ENCODE measurements at regions of chr1 and their contacts with region 1.

Region 1: DNA sequence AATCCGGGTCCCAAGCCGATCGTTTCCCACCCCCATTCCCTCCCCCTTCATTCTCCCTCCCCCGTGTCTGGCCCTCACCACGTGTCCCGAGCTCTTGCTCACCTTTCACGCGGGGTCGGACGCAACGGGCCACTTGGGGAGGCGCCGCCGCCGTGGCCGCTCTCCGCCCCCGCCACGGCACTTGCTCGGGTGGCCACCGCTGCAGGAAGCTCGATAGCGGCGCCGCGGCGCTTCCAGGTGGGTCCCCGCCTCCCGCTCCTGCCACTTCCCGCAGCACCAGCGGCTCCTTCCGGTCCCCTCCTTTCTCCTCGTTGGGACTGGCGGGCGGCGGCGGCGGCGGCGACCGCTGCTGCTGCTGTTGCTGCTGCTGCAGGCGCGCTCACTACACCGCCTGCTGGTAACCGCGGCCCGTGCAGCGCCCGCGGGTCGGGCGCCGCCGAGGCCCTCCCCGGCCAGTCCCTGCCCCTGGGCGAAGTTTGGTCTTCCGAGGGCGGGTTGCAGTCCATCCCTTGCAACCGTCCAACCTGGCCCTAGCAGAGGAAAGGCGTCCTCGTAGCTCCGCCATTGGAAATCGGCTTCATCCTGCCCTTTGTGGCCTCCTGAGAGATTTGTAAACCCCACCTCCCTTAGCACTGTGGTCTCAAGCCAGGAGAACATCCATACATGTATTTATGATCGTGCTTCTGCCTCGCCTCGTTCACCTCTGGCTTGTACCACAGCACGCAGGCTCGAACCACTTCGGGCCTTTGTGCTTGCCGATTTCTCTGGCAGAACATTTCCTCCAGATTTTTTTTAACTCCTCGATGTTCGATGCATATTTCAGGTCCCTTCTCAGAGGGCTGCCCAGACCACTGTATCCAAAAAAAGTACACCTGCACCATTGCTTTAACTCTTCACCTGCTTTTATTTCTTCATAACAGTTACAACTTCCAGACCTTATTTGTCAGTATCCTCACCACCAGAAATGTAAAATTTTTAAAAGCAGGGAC is 996 bp upstream of the ZZZ3 start:
- DNase-seq: peak; percentile 95

Region 2: DNA sequence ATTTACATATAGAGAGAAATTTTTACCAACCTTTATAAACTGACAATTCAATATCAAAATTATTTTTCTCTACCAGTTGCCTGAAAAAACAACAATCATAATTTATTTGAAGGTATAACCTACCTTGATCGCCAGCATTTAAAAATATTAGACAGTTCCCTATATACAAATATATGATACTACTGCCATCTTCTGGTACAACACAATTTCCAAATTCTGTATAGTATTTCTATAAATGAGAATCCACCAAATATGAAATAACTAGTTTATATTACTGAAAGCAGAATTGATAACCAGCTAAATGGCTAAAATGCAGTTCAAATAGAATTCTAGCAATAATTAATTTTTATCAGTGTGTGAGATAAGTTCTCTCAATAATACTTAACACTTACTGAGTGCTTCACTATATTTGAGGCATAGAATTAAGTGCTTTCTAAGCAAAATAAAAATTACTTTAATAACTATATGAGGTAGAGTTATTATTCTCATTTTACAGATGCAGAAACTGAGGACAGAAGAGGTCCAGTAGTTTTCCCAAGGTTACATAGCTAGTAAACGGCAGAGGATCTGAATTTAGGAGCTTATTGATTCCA is 539.8 kb before region 1 on chr1:
- intact Hi-C with region 1: loop called (anchors 2 kb)
- DNase-seq: no peak

Region 3: DNA sequence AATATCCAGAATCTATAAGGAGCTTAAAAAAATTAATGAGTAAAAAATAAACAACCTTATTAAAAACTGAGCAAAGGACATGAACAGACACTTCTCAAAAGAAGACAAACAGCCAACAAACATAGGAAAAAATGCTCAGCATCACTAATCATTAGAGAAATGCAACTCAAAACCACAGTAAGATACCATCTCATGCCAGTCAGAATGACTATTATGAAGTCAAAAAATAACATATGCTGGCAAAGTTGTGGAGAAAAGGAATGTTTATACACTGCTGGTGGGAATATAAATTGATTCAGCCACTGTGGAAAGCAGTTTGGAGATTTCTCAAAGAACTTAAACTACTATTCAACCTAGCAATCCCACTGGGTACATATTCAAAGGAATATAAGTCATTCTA is 489.5 kb before region 1 on chr1:
- intact Hi-C with region 1: no loop called
- DNase-seq: no peak

Region 4: DNA sequence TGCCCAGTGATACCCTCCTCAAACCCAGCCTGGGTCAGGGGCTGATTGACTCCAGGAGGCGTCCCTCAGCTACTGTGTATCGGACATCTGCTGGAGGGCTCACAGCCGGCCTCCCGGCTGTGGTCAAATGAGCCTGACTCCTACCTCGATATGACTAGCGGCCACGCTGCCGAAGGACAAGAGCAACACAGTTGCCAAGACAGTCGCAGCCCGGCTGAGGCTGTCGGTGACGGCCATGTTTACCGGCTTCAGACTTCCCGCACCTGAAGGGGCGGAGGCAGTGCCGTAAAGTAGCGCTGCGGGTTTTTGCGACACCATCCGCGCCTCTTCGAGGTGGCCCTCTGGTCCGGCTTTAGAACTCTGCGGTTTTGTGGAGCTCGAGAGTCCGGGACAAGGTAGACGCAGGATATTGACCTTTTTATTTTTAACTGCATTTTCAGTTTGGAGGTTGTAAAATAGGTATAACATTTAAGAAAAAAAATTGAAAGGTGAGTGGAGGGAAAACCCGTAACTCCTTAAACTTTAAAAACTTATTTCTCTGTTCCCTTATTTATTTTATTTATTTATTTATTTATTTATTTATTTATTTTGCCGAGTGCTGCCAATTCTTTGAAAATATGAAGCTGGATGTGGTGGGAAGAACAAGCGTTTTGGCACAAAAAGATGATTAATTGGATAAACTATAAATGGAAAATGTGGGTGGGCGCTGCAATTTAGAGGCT is 464.1 kb before region 1 on chr1 and contains the start of gene PIGK:
- intact Hi-C with region 1: loop called (anchors 1 kb)
- DNase-seq: peak; percentile 95
- total RNA-seq, gene PIGK: 24.1 TPM

Region 5: GRCh38 chr1:77538956-77539518 is 144.4 kb before region 1 on chr1:
- intact Hi-C with region 1: loop called (anchors 5 kb)
- DNase-seq: no peak

Region 6: GRCh38 chr1:77671836-77672235 is 11.6 kb before region 1 on chr1:
- intact Hi-C with region 1: no loop called
- DNase-seq: no peak

Region 7: DNA sequence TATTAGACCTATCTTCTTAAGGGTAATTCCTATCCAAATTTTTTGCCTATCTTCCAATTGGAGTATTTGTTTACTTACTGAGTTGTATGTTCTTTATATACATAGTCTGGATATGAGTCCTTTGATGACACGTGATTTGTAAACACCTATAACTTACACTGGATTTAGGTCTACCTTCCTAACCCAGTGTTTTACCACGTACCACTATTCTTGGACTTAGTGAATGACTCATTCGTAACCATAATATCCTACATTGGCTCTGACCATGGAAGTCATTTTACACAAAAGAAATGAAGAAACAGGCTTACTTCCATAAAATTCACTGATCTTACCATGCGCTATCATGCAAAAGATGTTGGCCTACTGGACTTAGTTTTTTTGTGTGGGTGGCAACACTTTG is 22.9 kb after region 1 on chr1:
- intact Hi-C with region 1: no loop called
- DNase-seq: no peak

Region 8: DNA sequence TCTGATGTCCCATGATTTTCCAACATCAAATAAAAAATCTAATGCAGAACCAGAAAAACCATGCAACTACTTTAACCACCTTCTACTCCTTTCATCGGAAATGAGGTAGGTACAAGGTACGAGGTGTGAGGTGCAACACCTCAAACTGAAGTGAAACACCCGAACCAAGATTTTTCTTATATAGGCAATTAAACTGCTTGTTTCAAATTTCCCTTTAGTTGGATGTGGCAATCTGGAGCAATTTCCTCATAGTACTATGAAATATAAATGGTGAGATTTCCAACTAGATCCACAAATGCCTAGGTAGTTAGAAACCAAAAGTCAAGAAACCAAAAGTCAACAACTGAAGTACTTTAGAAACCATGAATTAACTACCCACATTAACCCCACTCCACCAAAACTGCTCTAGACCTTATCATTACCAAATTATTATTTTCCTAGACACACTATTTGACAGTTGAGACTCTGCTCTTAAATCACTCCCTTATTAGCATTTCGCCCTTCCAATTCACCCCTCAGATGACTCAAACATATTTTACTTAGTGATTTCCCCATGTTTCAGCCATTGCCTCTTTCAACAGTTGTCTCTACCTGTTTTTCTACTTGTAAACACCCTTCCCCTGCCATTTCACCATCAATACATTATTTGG is 257.6 kb after region 1 on chr1:
- intact Hi-C with region 1: no loop called
- DNase-seq: no peak

Measured in cardiac septum (tissue), 1 donor.